ENCODE measurements at regions of chr12 and their contacts with region 1.

Region 1: GRCh38 chr12:38138225-38139221 is 178.1 kb upstream of the ALG10B start:
- DNase-seq: peak in 1 of 2 donors; percentile 67
- ATAC-seq: peak; percentile 34 to 80 (median 64)
- H3K4me3 ChIP-seq: peak overlapping the region in 9 of 10 donors; percentile 15 to 43 (median 29)
- H3K27ac ChIP-seq: no peak overlapping the region
- H3K4me1 ChIP-seq: peaks cover 0 to 11% (median 7%) of the 10 kb centered on the region in 9 donors
- H3K27me3 ChIP-seq: peaks cover 0 to 27% (median 19%) of the 10 kb centered on the region in 7 donors
- CTCF ChIP-seq: peak; percentile 93 to 99 (median 96)

Region 2: GRCh38 chr12:38316391-38317129 is 178.0 kb after region 1 on chr12 and contains the start of gene ALG10B:
- intact Hi-C with region 1: loop called (anchors 1 to 5 kb)
- DNase-seq: peak; percentile 89 to 95
- ATAC-seq: peak; percentile 99 to 100 (median 100)
- H3K4me3 ChIP-seq: peak within 1 kb of the TSS; percentile 71 to 93 (median 79)
- H3K27ac ChIP-seq: peak within 1 kb of the TSS; percentile 67 to 92 (median 86)
- H3K4me1 ChIP-seq: peaks cover 0 to 18% (median 9%) of the 10 kb centered on the region in 9 donors
- H3K27me3 ChIP-seq: no peaks in the 10 kb centered on the region
- CTCF ChIP-seq: peak; percentile 57 to 89 (median 75)
- total RNA-seq, gene ALG10B: 4.4 to 7.4 (median 5.2) TPM